ENCODE measurements at regions of chr11 and their contacts with region 1.

Region 1: GRCh38 chr11:6353367-6353987 is 33.2 kb upstream of the CAVIN3 start:
- DNase-seq: peak; percentile 64
- H3K4me3 Mint-ChIP-seq: no peak overlapping the region
- H3K27ac Mint-ChIP-seq: no peak overlapping the region
- H3K4me1 Mint-ChIP-seq: peaks cover 2% of the 10 kb centered on the region
- H3K27me3 Mint-ChIP-seq: peaks cover 11% of the 10 kb centered on the region

Region 2: DNA sequence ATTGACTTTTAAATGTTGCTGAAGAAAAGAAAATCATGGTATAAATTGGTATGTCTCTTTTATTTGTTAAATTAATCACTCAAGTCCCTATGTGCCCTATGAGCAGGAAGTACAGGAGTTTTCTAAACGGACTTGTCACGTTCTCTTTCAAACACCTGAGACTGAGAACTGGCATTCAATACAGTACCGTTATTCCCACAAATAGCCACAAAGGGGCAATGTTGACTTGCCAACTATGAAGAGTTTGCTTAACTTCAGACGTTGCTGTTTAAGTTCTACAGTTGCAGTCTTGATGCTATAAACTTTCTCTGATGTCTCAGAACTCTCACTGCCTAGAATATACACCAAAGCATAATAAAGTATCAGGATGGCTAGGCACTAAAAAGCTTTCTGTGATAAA is 330.5 kb before region 1 on chr11:
- CTCF ChIA-PET with region 1: interaction called, 21 read pairs
- DNase-seq: no peak
- H3K4me3 Mint-ChIP-seq: no peak overlapping the region
- H3K27ac Mint-ChIP-seq: no peak overlapping the region
- H3K4me1 Mint-ChIP-seq: no peaks in the 10 kb centered on the region
- H3K27me3 Mint-ChIP-seq: peaks cover 13% of the 10 kb centered on the region

Region 3: DNA sequence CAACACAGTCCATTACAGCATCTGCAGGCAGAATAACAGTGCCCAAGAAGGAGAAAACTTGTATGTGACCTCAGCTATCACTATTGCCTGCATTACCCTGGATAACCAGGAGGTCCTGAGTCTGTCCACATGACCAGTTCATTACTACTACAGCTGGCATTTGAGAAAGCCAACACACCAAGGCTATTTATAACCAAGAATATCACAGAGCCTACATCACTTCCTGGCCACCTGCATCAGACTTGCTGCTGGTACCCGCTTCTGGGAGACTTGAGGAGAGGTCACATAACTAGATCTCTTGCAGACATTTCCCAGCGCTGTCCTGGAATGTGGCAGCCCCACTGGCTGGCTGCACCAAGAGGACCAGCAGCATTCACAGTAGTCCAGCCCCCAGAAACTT is 257.1 kb before region 1 on chr11:
- CTCF ChIA-PET with region 1: no interaction called
- DNase-seq: no peak
- H3K4me3 Mint-ChIP-seq: no peak overlapping the region
- H3K27ac Mint-ChIP-seq: no peak overlapping the region
- H3K4me1 Mint-ChIP-seq: peaks cover 6% of the 10 kb centered on the region
- H3K27me3 Mint-ChIP-seq: peaks cover 8% of the 10 kb centered on the region

Region 4: DNA sequence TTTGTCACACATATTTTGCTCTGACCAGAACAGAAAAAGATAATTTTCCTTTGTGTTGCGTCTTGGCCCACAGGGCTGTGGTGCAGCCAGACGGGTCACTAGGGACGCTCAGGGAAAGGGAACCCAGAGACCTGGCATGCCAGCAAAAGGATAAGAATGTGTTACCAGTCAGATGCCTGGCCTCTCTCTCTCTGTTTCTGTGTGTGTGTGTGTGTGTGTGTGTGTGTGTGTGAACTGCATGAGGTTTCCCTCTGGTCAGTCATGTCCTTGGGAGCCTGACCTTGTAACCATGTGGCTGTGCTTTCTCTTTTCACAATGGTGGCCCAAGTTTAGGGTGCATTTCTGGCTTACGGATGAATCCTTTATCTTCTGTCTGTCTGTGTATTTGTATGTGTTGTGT is 68.5 kb before region 1 on chr11:
- CTCF ChIA-PET with region 1: interaction called, 10 read pairs
- DNase-seq: no peak
- H3K4me3 Mint-ChIP-seq: no peak overlapping the region
- H3K27ac Mint-ChIP-seq: no peak overlapping the region
- H3K4me1 Mint-ChIP-seq: no peaks in the 10 kb centered on the region
- H3K27me3 Mint-ChIP-seq: peaks cover 40% of the 10 kb centered on the region

Region 5: DNA sequence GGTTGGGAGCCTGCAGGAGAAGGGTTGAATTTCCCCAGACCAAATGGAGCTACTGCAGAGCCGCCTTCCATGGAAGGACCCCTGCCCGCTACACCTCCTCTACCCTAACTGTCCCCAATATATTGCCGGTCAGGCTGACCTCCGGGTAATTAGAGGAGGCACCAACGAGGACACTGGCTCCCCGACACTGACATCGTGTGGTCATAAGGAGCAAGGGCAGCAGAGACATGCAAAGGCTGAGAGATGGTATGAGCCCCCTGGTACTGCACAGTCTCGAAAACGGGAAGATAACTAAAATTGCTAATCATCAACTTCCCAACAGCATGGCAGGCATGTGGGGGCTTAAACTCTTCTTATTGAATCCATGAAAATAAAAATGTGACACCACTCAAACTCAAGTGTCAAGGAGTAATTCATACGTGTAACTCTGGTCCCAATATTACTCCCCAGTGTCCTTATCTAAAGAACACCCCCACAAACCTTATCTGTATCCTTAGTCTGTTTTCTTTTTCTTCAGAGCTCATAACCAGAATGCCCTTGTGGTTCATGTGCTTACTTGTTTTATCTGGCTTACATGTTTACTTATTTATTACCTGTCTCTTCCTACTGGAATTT is 37.6 kb before region 1 on chr11:
- CTCF ChIA-PET with region 1: interaction called, 65 read pairs
- DNase-seq: peak; percentile 44
- H3K4me3 Mint-ChIP-seq: no peak overlapping the region
- H3K27ac Mint-ChIP-seq: no peak overlapping the region
- H3K4me1 Mint-ChIP-seq: peaks cover 13% of the 10 kb centered on the region
- H3K27me3 Mint-ChIP-seq: peaks cover 63% of the 10 kb centered on the region

Region 6: GRCh38 chr11:6328321-6328720 is 25.2 kb before region 1 on chr11:
- CTCF ChIA-PET with region 1: interaction called, 20 read pairs
- DNase-seq: no peak
- H3K4me3 Mint-ChIP-seq: no peak overlapping the region
- H3K27ac Mint-ChIP-seq: no peak overlapping the region
- H3K4me1 Mint-ChIP-seq: no peaks in the 10 kb centered on the region
- H3K27me3 Mint-ChIP-seq: peaks cover 18% of the 10 kb centered on the region

Measured in activated naive CD4-positive, alpha-beta T cell treated with anti-CD3 and anti-CD28 coated beads, Interleukin-2, amount 10 ng/mL, durations not matched to agents 7 days and 5 days (primary cell).